Activated CD4-positive, alpha-beta T cell treated with anti-CD3 and anti-CD28 coated beads for 36 hours (primary cell): ENCODE measurements at regions of chr9 and their contacts with region 1.

Region 1: GRCh38 chr9:127943731-127944144 is 6.1 kb upstream of the DPM2 start:
- DNase-seq: peak; percentile 91
- ATAC-seq: peak; percentile 87
- H3K4me3 Mint-ChIP-seq: no peak overlapping the region
- H3K27ac Mint-ChIP-seq: peak overlapping the region; percentile 81
- H3K4me1 Mint-ChIP-seq: peaks cover 23% of the 10 kb centered on the region
- H3K27me3 Mint-ChIP-seq: no peaks in the 10 kb centered on the region

Region 2: GRCh38 chr9:127930231-127931091 is 13.3 kb before region 1 on chr9 and contains the start of gene PIP5KL1:
- CTCF ChIA-PET with region 1: interaction called, 18 read pairs
- POLR2A ChIA-PET with region 1: no interaction called
- intact Hi-C with region 1: no loop called
- DNase-seq: peak; percentile 82
- ATAC-seq: peak; percentile 71
- H3K4me3 Mint-ChIP-seq: peak within 1 kb of the TSS; percentile 45
- H3K27ac Mint-ChIP-seq: no peak within 1 kb of the TSS
- H3K4me1 Mint-ChIP-seq: peaks cover 30% of the 10 kb centered on the region
- H3K27me3 Mint-ChIP-seq: no peaks in the 10 kb centered on the region
- total RNA-seq, gene PIP5KL1: 1.9 to 2.8 TPM

Region 3: DNA sequence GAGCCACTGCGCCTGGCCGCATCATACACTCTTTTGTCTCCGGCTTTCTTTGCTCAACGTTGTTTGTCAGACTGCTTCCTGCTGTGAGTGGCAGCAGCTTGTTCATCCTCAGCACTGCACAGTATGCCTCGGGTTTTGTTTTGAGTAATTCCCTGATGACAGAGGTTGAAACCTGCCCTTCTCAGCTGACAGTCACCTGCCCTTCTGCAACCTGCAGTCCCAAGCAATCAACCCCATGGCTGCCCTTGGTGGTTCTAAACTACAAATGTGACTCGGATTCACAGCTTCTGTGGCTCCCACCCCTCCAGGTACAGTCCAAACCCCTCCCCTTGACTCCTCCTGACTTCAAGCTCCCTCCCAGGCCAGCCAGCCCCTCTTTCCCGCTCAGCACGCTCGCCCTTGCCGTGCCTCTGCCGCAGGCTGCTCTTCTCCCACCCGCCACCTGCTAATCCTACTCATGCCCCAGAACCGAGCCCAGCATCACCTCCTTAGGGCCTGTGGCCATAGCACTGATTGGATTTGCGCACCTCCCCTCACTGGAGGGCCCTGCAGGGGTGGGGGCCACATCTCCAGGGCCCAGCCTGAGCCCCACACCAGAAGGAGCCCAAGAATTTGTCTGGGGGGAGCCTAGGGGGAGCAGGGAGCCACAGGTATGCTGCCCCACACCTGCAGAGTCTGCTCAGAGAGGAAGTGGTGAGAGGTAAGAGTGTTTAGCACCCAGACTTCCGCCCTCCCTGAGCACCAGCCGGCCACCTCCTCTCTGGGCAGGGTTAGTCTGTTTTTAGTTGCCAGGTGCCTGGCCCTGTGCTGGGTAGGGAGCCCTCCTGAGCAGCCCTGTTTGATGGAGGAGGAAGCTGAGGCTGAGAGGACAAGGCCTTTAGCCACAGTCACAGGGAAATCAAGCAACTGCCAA is 26.9 kb after region 1 on chr9:
- CTCF ChIA-PET with region 1: interaction called, 11 read pairs
- POLR2A ChIA-PET with region 1: interaction called, 3 read pairs
- intact Hi-C with region 1: loop called (anchors 1 to 5 kb)
- DNase-seq: peak; percentile 87
- ATAC-seq: peak; percentile 76
- H3K4me3 Mint-ChIP-seq: peak overlapping the region; percentile 69
- H3K27ac Mint-ChIP-seq: peak overlapping the region; percentile 92
- H3K4me1 Mint-ChIP-seq: peaks cover 97% of the 10 kb centered on the region
- H3K27me3 Mint-ChIP-seq: no peaks in the 10 kb centered on the region

Region 4: DNA sequence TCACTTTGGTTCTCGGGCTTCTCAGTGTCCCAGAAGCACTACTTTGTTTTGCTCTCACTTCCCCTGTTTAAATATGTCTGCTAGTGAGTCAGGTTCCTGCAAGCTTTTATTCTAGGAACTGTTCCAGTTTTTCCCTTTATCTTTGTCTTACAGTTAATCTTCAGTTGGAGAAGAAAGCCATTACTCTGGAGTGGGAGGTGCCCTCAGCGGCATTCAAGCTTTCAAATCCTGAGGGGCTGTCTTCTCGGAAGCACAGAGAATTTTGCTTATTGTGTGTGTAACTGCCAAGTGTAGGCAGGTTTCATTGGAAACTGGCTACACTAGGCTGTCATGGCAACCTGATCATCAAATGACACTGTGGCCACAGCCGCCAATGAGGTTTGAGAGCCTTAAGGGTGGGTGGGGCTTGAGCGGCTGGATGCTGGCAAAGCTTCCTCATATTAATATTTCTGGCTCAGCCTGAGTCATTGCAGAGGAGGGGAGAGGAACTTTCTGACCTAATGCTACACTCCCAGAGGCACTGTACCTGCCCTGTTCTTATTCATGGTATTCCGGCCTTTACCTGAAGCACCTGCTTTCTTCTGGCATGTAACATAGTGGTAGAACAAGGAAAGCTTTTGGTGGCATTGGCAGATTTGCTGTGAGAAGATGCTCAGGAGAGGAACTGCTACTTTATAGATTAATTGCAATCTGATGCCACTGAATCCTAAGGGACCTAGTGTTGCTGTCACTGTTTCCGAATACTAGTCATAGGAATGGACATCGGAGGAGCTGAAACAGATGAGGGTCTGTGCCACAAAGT is 150.6 kb after region 1 on chr9:
- CTCF ChIA-PET with region 1: interaction called, 20 read pairs
- POLR2A ChIA-PET with region 1: no interaction called
- intact Hi-C with region 1: loop called in 1 of 2 experiments (anchors 5 kb)
- DNase-seq: peak; percentile 93
- ATAC-seq: peak; percentile 94
- H3K4me3 Mint-ChIP-seq: peak overlapping the region; percentile 61
- H3K27ac Mint-ChIP-seq: peak overlapping the region; percentile 97
- H3K4me1 Mint-ChIP-seq: peaks cover 84% of the 10 kb centered on the region
- H3K27me3 Mint-ChIP-seq: no peaks in the 10 kb centered on the region

Region 5: GRCh38 chr9:128117613-128118471 is 174.1 kb after region 1 on chr9:
- CTCF ChIA-PET with region 1: interaction called, 10 read pairs
- POLR2A ChIA-PET with region 1: no interaction called
- intact Hi-C with region 1: loop called in 1 of 2 experiments (anchors 1 kb)
- DNase-seq: peak; percentile 99
- ATAC-seq: peak; percentile 94
- H3K4me3 Mint-ChIP-seq: no peak overlapping the region
- H3K27ac Mint-ChIP-seq: no peak overlapping the region
- H3K4me1 Mint-ChIP-seq: peaks cover 5% of the 10 kb centered on the region
- H3K27me3 Mint-ChIP-seq: no peaks in the 10 kb centered on the region